OCI-LY7 (cell line): ENCODE measurements at regions of chr1 and their contacts with region 1.

Region 1: DNA sequence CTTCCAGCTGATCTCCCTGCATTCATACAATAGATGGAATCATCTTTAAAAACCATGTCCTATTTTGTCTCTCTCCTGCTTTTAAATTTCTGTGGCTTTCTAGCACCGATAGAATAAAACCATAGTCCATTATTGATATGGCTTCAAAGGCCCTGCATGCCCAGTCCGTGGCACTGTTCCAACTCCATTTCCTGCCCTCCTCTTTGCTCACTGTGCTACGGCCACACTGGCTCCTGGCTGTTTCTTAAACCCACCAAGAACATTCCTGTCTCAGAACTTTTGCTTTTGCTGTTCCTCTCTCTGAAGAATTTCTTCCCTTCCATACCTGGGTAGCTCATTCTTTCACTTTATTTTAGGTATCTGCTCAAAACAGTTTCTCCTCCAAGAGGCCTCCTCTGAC is 7.2 kb downstream of the SLAMF1 start:
- DNase-seq: no peak
- H3K4me3 ChIP-seq: no peak overlapping the region
- H3K27ac ChIP-seq: no peak overlapping the region
- H3K4me1 ChIP-seq: peaks cover 39% of the 10 kb centered on the region
- CTCF ChIP-seq: no peak

Region 2: DNA sequence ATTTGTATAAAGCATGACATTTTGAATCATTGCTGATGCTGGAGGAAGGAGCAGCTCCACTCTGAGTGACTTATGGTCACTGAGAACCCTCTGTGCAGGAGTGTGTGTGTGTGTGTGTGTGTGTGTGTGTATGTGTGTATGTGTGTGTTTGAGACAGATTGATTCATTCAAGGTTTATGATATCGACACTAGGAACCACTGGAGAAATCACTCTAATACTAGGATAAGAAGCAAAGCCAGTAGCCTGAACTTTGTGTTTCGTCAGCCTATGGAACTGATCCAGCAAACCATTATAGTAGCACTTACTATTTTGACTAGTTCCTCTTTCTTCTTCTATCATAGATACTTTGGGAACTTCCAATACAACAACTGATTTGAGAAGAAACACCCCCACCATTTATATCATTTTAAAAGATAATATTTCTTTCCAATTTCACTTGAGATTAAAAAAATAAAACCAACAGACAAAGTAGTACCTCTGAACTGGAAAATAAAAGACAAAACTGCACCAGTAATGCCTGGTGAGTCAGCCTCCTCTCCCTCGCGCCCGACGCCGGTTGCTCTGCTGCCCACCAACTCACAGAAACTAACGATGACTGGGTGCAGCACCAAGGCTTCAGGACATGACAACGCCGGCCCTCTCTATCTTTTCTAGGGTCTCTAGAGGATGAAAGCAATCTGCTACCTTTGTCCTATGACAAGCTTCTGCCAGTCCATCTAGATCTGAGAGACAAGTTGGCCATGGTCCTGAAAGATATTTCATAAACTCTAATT is 13.7 kb before region 1 on chr1:
- CTCF ChIA-PET with region 1: no interaction called
- POLR2A ChIA-PET with region 1: interaction called, 10 read pairs
- intact Hi-C with region 1: no loop called
- DNase-seq: no peak
- H3K4me3 ChIP-seq: peak overlapping the region; percentile 43
- H3K27ac ChIP-seq: peak overlapping the region; percentile 87
- H3K4me1 ChIP-seq: peaks cover 96% of the 10 kb centered on the region
- CTCF ChIP-seq: no peak

Region 3: DNA sequence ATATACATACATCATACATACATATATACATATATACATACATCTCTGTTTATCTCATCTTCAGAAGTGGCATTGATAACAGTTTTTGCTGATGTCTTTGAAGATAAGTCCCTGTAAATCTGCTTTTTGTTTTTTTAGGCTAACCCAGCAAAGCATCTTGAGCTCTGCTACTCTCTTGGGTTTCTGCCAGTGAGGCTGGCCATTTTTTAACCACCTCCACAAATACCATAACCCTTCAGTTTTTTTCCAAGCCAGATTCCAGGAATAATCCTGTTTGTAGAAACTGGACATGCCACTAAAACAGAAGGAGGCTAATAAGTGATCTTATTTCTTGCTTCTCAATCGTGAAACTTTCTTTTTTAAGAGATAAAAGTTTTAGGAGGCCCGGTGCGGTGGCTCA is 696.1 kb after region 1 on chr1:
- CTCF ChIA-PET with region 1: no interaction called
- POLR2A ChIA-PET with region 1: no interaction called
- intact Hi-C with region 1: no loop called
- DNase-seq: no peak
- H3K4me3 ChIP-seq: no peak overlapping the region
- H3K27ac ChIP-seq: no peak overlapping the region
- H3K4me1 ChIP-seq: no peaks in the 10 kb centered on the region
- CTCF ChIP-seq: no peak